ENCODE measurements at regions of chr12 and their contacts with region 1.

Region 1: DNA sequence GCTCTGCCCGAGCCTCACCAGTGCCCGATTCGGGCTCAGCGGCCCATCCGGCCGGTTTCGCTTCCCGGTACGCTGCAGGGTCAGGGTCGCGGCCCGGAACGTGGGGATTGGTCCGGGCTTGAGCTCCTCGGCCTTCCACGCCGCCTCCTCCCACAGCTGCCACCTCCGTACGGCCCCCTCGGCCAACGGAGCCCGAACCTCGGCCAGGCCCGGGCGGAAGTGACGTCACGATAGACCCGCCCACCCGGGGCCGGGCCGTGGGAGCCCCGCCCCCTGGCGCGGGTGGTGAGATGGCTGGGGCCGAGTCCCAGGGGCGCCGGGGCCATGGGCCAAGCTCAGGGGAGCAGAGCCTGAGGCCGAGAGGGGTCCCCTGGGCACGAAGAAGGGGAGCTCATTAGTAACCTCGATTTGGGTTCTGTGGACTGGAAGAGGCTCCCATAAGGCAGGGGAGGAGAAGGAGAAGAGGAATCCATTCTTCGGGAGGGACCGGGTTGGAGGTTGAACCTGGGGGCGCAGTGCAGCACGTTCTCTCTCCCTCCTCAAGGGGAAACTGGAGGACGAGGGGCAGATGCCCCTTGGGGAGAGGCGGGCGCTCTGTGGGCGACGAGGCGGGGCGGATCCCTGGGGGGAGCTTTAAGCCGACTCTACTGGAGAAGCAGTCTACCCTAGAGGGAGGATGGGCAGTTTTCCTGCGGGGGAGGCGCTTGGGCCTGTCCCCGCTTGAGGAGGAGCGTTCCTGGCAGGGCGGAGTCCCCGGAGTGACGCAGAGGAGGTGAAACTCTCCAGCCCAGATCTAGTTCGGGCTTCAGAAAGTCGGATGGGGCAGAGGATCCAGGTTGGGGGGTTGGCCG is at the start of gene MLF2:
- DNase-seq: peak; percentile 99
- H3K27ac ChIP-seq: peak within 1 kb of the TSS; percentile 91
- CTCF ChIP-seq: peak; percentile 74

Region 2: GRCh38 chr12:6267139-6267721 is 485.9 kb before region 1 on chr12:
- CTCF ChIA-PET with region 1: no interaction called
- POLR2A ChIA-PET with region 1: no interaction called
- DNase-seq: no peak
- H3K27ac ChIP-seq: 0 out of 2 replicates have a peak overlapping the region, but pooled peaks have one; percentile 25
- CTCF ChIP-seq: no peak

Region 3: GRCh38 chr12:6305840-6306567 is 447.1 kb before region 1 on chr12:
- CTCF ChIA-PET with region 1: no interaction called
- POLR2A ChIA-PET with region 1: no interaction called
- DNase-seq: no peak
- H3K27ac ChIP-seq: no peak overlapping the region
- CTCF ChIP-seq: no peak

Region 4: DNA sequence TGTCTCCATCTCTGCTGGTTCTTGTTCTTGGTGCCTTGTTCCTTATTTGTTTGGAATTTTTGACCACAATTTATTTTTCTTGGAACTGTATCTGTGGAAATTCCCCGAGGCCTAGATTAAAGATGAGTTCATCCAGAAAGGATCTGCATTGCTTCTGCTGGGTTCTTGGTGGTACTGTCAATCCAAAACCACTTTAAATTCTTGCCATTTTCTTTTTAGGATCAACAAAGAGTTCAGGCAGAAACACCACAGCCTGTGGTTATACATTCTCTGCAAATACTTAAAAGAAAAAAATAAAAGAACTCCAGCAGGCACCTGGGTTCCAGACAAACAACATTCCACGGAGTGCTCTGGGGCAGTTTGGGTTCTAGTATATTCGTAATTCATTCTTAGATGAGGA is 276.7 kb before region 1 on chr12:
- CTCF ChIA-PET with region 1: no interaction called
- POLR2A ChIA-PET with region 1: no interaction called
- DNase-seq: no peak
- H3K27ac ChIP-seq: no peak overlapping the region
- CTCF ChIP-seq: no peak

Region 5: GRCh38 chr12:6766651-6767349 is 13.7 kb after region 1 on chr12:
- CTCF ChIA-PET with region 1: interaction called, 27 read pairs
- POLR2A ChIA-PET with region 1: interaction called, 11 read pairs
- DNase-seq: peak; percentile 57
- H3K27ac ChIP-seq: peak overlapping the region; percentile 94
- CTCF ChIP-seq: peak; percentile 68

Region 6: DNA sequence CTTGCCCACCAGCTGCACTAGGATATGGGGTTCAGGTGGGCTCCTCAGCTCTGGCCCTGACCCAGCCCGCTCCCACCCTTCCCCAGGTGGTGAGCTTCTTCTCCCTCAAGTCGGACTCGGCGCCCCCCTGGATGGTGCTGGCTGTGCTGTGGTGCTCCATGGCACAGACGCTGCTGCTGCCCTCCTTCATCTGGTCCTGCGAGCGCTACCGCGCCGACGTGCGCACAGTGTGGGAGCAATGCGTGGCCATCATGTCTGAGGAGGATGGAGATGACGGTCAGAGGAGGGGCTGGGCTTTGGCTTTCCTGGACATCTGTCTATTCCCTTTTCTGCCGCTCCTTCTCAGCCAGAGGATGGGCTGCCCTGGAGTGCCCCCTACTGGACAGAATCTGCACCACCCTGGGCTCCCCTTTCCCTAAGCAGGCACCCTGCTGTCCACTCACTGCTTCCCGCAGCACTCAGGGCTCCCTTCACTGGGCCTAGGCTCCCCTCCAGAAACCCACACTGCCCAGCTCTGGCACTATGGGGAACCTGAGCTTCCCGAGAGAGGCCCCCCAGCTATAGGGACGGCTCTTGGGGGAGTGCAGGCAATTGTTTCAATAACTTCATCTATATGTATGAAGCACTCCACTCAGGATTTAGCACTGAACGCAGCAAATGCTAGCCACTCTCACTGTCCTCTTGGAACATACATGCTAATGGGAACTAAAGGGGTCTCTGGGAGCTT is 72.4 kb after region 1 on chr12:
- CTCF ChIA-PET with region 1: interaction called, 20 read pairs
- POLR2A ChIA-PET with region 1: interaction called, 4 read pairs
- DNase-seq: peak; percentile 64
- H3K27ac ChIP-seq: no peak overlapping the region
- CTCF ChIP-seq: peak; percentile 64

Measured in RWPE1 (cell line).